GM18951 (cell line): ENCODE measurements at regions of chr20 and their contacts with region 1.

Region 1: GRCh38 chr20:52127309-52127708 is 64.3 kb downstream of the ZFP64 start:
- POLR2A ChIP-seq: no peak

Region 2: DNA sequence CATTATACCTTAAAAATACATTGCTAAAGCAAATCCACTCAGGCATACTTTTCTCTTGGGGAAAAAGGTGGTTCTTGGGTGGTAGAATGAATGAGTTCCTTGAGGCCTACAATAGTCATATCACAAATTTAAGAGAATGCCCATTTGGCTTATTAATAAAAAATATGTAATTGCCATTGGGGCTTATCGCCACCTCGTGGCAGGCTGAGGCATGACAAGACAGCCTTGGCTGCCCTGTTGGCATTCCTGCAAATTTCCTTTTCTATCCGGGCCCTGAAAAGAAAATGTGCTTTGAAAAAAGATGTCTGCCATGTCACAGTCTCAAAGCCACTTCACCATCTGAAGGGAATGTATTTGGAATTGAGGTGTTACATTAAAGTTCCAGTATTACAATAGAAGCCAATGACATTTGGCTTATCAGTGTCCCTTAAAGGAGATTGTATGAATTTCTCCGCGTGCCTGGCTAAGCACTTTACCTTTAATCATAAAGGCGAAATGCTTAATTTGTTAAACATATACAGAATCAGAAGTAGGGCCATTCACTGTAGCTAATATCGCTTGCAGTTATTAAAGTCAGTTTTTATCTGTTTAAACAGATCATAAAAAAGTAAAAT is 252.5 kb after region 1 on chr20:
- in situ Hi-C with region 1: loop called (anchors 10 kb)
- POLR2A ChIP-seq: no peak

Region 3: DNA sequence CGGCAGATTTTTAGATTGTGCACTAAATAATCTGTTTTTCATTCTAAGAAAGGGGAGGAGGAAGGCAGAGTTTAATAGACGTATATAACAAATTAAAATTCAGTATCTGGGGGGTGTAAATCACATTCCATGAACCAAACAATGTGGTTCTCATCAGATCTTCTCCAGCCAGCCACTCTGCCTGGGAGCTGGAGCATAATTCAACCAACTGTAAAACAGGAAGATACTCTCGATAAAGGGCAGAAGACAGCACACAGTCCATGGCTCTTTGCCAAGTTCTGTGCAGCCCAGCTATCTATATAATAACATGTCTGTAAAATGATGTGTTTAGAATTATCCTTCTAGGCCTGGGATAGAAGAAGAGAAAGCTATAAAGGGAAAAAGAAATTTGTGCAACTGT is 354.1 kb after region 1 on chr20:
- in situ Hi-C with region 1: no loop called
- POLR2A ChIP-seq: no peak